PC-9 (cell line): ENCODE measurements at regions of chr6 and their contacts with region 1.

Region 1: GRCh38 chr6:7615611-7616383 is 25.8 kb downstream of the SNRNP48 start:
- DNase-seq: peak; percentile 47
- H3K4me3 ChIP-seq: no peak overlapping the region
- H3K27ac ChIP-seq: no peak overlapping the region
- H3K4me1 ChIP-seq: peaks cover 7% of the 10 kb centered on the region
- H3K27me3 ChIP-seq: no peaks in the 10 kb centered on the region
- CTCF ChIP-seq: peak; percentile 74

Region 2: DNA sequence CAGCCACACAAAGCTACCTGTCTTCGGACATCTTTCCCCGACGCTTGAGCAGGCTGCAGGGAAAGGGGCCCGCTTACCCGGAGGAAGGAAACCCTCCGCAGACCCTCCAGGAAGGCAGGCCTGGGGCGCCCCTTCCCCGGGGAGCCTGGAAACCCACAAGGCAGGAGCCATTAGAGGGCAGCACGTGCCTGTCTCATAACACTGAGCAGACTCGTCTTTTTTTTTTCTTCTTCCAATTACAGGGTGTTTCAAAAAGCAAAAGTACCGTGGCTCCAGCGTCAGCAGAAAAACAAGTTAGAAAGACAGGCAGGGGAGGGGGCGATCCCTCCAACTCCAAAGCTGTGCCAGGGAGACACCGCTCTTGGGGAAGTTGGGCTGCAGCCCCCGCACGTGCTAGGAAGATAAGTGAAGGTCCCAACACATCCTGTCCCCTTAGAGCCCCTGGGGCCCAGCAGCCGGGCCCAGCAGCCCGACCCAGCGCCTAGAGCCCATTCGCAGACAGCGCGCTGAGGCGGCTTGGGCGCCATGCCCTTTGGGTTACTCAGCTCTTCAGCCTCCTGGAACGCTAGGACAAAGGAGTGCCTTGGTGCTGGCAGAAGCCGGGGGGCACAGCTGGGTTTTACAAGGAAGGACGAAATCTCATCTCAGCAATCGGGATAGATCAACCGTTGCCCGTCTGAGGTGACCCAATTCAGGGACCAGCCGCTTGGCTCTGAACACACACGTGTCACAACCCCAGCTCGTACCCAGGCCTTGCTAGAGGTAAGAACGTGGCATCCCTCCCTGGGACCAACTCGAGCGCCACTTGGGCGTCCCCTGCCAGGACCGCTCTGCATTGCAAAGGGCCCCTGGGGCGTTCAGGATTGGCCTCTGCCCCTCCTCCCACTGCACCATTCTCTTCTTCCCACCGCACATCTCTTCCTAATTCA is 891.0 kb before region 1 on chr6:
- CTCF ChIA-PET with region 1: no interaction called
- POLR2A ChIA-PET with region 1: no interaction called
- intact Hi-C with region 1: loop called (anchors 1 kb)
- DNase-seq: peak in 1 of 2 experiments; percentile 70
- H3K4me3 ChIP-seq: no peak overlapping the region
- H3K27ac ChIP-seq: no peak overlapping the region
- H3K4me1 ChIP-seq: peaks cover 14% of the 10 kb centered on the region
- H3K27me3 ChIP-seq: no peaks in the 10 kb centered on the region
- CTCF ChIP-seq: peak; percentile 64

Region 3: DNA sequence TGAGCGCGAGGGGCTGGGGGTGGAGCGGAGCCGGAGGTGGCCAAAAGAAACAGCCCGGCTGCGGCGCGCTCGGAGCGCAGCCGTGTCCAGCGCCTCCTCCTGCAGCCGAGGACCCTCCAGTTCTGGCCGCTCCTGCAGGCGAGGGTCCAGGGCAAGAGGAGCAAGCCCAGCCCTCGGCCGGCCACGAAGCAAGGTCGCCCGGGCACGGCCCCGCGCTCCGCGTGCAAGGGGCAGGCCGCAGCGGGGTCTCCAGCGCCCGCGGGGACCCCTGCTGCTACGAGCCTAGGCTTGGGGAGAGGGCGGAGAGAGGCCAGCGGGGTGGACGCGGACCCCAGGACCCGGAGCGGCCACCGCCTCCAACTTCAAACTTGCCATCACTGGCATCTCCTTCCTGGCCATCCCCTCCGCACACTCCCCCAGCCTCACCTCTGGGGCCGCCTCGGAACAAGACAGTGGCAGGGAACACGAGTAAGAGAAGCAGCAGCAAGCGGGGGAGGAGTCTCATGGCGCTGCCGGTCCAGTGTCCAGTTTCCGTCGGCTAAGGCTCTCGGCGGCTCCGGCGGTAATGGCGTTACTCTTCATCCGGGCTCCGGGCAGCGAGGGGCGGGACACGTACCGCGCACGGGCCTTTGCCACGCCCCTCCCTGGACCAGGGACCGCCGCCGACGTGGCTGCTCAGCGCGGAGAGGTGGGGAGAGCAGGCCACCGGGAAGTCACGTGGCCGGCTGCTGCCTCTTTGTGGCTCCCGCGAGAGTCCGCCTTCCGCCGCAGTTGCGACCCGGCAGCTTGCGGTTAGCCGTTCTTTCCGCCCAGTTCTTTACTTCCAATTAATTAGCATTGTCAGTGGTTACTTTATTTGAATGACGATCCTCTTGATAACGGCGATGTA is 302.9 kb before region 1 on chr6 and contains the start of gene SSR1:
- CTCF ChIA-PET with region 1: no interaction called
- POLR2A ChIA-PET with region 1: no interaction called
- intact Hi-C with region 1: loop called (anchors 2 kb)
- DNase-seq: peak; percentile 84 to 98
- H3K4me3 ChIP-seq: peak within 1 kb of the TSS; percentile 94
- H3K27ac ChIP-seq: peak within 1 kb of the TSS; percentile 97
- H3K4me1 ChIP-seq: peaks cover 22% of the 10 kb centered on the region
- H3K27me3 ChIP-seq: no peaks in the 10 kb centered on the region
- CTCF ChIP-seq: no peak
- total RNA-seq, gene SSR1: 104 and 118 TPM in 2 replicates

Region 4: GRCh38 chr6:7725849-7726415 is 110.1 kb after region 1 on chr6 and contains the start of gene BMP6:
- CTCF ChIA-PET with region 1: no interaction called
- POLR2A ChIA-PET with region 1: no interaction called
- intact Hi-C with region 1: loop called (anchors 2 kb)
- DNase-seq: peak; percentile 78 to 90
- H3K4me3 ChIP-seq: peak within 1 kb of the TSS; percentile 71
- H3K27ac ChIP-seq: no peak within 1 kb of the TSS
- H3K4me1 ChIP-seq: peaks cover 27% of the 10 kb centered on the region
- H3K27me3 ChIP-seq: 0 out of 2 replicates have a peak, but pooled peaks cover 4% of the 10 kb centered on the region
- CTCF ChIP-seq: no peak
- total RNA-seq, gene BMP6: not detected in 2 replicates

Region 5: DNA sequence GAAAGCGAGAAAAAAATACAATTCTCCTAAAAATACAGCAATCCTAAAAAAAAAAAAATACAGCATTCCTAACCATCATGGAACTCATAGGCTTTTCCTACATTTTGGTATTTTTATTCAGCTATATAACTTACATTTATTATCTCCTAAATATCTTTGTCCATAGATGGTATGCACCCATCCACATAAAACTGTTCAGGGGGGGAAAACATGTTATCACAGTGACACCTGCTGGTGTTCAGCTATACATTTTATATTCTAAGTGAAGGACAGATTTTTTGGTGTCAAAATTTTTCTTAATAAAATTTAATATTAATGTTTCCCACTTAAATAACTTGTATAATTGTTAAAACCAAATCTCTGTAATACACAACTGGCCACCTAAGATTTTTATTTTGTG is 390.4 kb after region 1 on chr6:
- CTCF ChIA-PET with region 1: no interaction called
- POLR2A ChIA-PET with region 1: no interaction called
- intact Hi-C with region 1: loop called (anchors 2 kb)
- DNase-seq: no peak
- H3K4me3 ChIP-seq: no peak overlapping the region
- H3K27ac ChIP-seq: no peak overlapping the region
- H3K4me1 ChIP-seq: no peaks in the 10 kb centered on the region
- H3K27me3 ChIP-seq: no peaks in the 10 kb centered on the region
- CTCF ChIP-seq: peak; percentile 61